Esophagus muscularis mucosa (tissue), 4 donors: ENCODE measurements at regions of chr16 and their contacts with region 1.

Region 1: GRCh38 chr16:57479976-57480753 is 6.1 kb downstream of the DOK4 start:
- DNase-seq: no peak
- H3K4me3 ChIP-seq: peak overlapping the region; percentile 45 to 60 (median 52)
- H3K27ac ChIP-seq: peak overlapping the region; percentile 9 to 55 (median 49)
- H3K4me1 ChIP-seq: peaks cover 27 to 69% (median 60%) of the 10 kb centered on the region in 4 donors
- H3K27me3 ChIP-seq: no peaks in the 10 kb centered on the region
- CTCF ChIP-seq: no peak
- EP300 ChIP-seq: no peak
- POLR2A ChIP-seq: no peak

Region 2: GRCh38 chr16:57394444-57394843 is 85.7 kb before region 1 on chr16:
- intact Hi-C with region 1: no loop called
- DNase-seq: no peak
- H3K4me3 ChIP-seq: no peak overlapping the region
- H3K27ac ChIP-seq: no peak overlapping the region
- H3K4me1 ChIP-seq: peaks cover 0 to 13% (median 6%) of the 10 kb centered on the region in 4 donors
- H3K27me3 ChIP-seq: no peaks in the 10 kb centered on the region
- CTCF ChIP-seq: no peak
- EP300 ChIP-seq: no peak
- POLR2A ChIP-seq: no peak

Region 3: DNA sequence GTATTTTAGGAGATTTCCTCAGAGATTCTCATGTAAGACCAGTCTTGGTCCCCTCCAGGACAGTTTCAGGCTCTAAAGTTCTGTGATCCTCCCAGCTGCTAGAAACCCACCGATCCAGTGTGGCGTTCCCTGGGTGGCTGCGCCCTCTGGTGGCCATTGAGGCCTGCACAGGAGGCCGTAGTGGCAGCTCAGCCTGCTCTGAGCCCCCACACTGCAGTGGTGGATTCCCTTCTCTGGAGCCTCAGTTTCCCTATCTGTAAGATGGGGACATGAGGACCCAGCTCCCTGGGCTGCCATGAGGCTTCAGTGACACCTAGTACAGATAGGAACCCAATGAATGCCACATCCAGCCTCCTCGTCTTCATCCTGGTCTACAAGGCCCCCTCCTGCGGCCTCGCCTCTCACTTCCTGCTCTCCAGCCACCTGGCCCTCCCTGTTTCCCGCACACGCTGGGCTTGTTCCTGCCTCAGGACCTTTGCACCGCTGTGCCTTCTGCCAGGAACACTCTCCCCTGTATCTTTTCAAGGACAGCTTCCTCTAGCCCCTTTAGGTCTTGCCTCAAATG is 39.7 kb after region 1 on chr16:
- intact Hi-C with region 1: loop called (anchors 5 kb)
- DNase-seq: no peak
- H3K4me3 ChIP-seq: no peak overlapping the region
- H3K27ac ChIP-seq: no peak overlapping the region
- H3K4me1 ChIP-seq: peaks cover 0 to 7% (median 4%) of the 10 kb centered on the region in 4 donors
- H3K27me3 ChIP-seq: no peaks in the 10 kb centered on the region
- CTCF ChIP-seq: peak; percentile 84 to 98 (median 87)
- EP300 ChIP-seq: no peak
- POLR2A ChIP-seq: no peak